CD4-positive, alpha-beta T cell (primary cell): ENCODE measurements at regions of chr2 and their contacts with region 1.

Region 1: DNA sequence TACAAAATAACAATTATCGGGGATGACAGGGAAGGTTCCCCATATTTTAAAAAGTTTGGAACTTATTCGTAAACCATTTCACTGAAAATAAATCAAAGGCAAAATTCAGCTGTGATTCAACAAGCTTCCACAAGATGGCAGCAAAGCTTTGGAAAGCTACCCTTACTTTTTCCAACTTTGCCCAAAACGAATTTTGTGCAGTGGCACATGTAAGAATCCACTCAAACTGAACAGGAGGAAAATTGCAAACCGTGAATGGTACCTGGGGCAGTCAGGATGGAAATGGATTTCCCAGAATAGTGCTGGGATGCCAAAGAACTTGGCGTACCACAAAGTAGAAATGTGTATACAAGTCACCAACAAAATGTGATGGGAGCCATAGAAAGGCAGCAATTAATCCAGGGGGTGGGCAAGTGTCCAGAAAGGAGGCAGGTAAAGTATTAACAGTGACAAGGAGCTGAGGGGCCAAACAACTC is 10.7 kb downstream of the RPL31 start:
- DNase-seq: peak in 10 of 14 experiments; percentile 13 to 70 (median 24)
- ATAC-seq: no peak
- H3K4me3 ChIP-seq: no peak overlapping the region
- H3K4me3 Mint-ChIP-seq: no peak overlapping the region
- H3K27ac ChIP-seq: no peak overlapping the region
- H3K27ac Mint-ChIP-seq: no peak overlapping the region
- H3K4me1 ChIP-seq: no peaks in the 10 kb centered on the region
- H3K4me1 Mint-ChIP-seq: peaks cover 20% of the 10 kb centered on the region
- H3K27me3 ChIP-seq: no peaks in the 10 kb centered on the region
- H3K27me3 Mint-ChIP-seq: no peaks in the 10 kb centered on the region
- CTCF ChIP-seq: peak; percentile 88

Region 2: DNA sequence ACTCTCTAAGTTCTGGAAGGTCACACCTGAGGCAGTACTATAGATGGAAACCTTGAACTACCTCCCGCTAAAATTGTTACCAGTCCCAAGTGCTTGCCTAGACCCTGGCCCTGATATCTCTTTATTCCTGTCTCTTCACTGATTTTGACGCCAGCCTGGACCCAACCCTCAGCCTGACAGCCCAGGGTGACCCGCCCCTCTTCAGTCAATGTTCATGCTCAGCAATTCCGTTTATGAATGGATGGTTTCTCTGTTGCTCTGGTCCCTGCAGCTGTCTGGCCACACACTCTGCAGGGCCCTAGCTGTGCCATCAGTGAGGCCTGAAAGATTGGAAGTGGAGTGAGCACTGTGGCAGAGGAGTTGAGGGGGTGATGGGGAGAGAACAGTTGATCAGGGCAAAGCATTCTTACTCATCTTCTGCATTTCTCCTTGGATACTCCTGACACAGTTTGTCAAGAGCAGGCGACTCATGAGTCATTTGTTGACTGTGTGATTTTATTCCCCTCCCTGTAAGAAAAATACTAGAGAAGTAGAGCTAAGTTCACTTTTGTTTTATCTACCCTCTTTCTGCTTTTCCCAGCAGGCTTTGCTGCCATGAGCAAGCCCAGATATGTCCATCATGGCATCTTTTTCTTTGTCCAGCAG is 146.8 kb before region 1 on chr2:
- CTCF ChIA-PET with region 1: no interaction called
- POLR2A ChIA-PET with region 1: no interaction called
- intact Hi-C with region 1: no loop called
- DNase-seq: no peak
- ATAC-seq: no peak
- H3K4me3 ChIP-seq: no peak overlapping the region
- H3K4me3 Mint-ChIP-seq: no peak overlapping the region
- H3K27ac ChIP-seq: no peak overlapping the region
- H3K27ac Mint-ChIP-seq: no peak overlapping the region
- H3K4me1 ChIP-seq: no peaks in the 10 kb centered on the region
- H3K4me1 Mint-ChIP-seq: peaks cover 21% of the 10 kb centered on the region
- H3K27me3 ChIP-seq: no peaks in the 10 kb centered on the region
- H3K27me3 Mint-ChIP-seq: peaks cover 3% of the 10 kb centered on the region
- CTCF ChIP-seq: no peak

Region 3: DNA sequence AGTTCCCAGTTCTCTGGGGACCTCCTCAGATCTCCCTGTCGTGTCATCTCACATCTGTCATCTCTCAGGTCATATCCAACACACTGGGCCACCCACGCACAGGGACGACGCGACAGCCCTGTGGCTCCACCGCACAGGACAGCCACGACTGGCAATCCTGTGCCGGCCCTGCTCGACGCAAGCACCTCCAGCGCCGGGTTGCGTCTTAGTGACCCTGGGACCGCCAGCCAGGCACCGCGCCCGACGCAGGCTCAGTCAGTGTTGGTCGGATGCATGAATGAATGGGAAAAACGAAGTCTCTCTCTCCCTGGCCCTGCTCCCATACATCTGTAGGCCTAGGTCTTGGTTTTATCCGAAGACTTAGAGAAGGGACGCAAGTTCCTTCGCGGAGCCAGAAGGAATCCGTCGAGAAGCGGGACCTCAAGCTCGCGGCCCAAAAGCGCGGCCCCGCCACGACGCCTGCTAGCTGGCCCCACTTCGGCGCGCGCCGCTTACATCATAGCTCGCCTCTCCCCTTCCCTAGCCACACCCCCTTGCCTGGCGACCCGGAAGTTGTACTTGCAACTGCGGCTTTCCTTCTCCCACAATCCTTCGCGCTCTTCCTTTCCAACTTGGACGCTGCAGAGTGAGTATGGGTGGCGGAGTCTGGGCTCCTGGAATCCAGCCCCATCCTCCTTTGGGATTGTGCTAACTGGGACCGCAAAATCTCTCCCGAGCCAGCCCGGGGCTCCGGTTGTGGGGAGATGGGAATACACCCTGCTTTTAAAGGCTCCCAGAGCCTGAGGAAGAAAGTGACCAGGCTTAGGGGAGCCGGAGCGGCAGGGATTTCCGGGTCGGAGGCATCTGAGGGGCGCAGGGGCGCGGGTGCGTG is 10.8 kb before region 1 on chr2 and contains the start of gene RPL31:
- CTCF ChIA-PET with region 1: interaction called, 11 read pairs
- POLR2A ChIA-PET with region 1: interaction called, 15 read pairs
- intact Hi-C with region 1: no loop called
- DNase-seq: peak; percentile 90 to 98 (median 94)
- ATAC-seq: peak; percentile 95
- H3K4me3 ChIP-seq: peak within 1 kb of the TSS; percentile 82
- H3K4me3 Mint-ChIP-seq: peak within 1 kb of the TSS; percentile 90
- H3K27ac ChIP-seq: peak within 1 kb of the TSS; percentile 80 to 83
- H3K27ac Mint-ChIP-seq: peak within 1 kb of the TSS; percentile 91
- H3K4me1 ChIP-seq: peaks cover 36% of the 10 kb centered on the region
- H3K4me1 Mint-ChIP-seq: peaks cover 52% of the 10 kb centered on the region
- H3K27me3 ChIP-seq: no peaks in the 10 kb centered on the region
- H3K27me3 Mint-ChIP-seq: no peaks in the 10 kb centered on the region
- CTCF ChIP-seq: no peak
- total RNA-seq, gene RPL31: 2,901 to 2,913 TPM

Region 4: GRCh38 chr2:101387151-101387807 is 374.5 kb after region 1 on chr2 and contains the start of gene CREG2:
- CTCF ChIA-PET with region 1: no interaction called
- POLR2A ChIA-PET with region 1: no interaction called
- intact Hi-C with region 1: loop called (anchors 2 kb)
- DNase-seq: peak; percentile 27 to 80 (median 49)
- ATAC-seq: peak; percentile 93
- H3K4me3 ChIP-seq: peak within 1 kb of the TSS; percentile 44
- H3K4me3 Mint-ChIP-seq: peak within 1 kb of the TSS; percentile 79
- H3K27ac ChIP-seq: no peak within 1 kb of the TSS
- H3K27ac Mint-ChIP-seq: no peak within 1 kb of the TSS
- H3K4me1 ChIP-seq: peaks cover 13% of the 10 kb centered on the region
- H3K4me1 Mint-ChIP-seq: peaks cover 11% of the 10 kb centered on the region
- H3K27me3 ChIP-seq: peaks cover 20 to 38% of the 10 kb centered on the region in 2 experiments
- H3K27me3 Mint-ChIP-seq: peaks cover 61% of the 10 kb centered on the region
- CTCF ChIP-seq: peak; percentile 56
- total RNA-seq, gene CREG2: 0.03 TPM in 1 of 2 experiments, not detected in the other